ENCODE measurements at regions of chr20 and their contacts with region 1.

Region 1: DNA sequence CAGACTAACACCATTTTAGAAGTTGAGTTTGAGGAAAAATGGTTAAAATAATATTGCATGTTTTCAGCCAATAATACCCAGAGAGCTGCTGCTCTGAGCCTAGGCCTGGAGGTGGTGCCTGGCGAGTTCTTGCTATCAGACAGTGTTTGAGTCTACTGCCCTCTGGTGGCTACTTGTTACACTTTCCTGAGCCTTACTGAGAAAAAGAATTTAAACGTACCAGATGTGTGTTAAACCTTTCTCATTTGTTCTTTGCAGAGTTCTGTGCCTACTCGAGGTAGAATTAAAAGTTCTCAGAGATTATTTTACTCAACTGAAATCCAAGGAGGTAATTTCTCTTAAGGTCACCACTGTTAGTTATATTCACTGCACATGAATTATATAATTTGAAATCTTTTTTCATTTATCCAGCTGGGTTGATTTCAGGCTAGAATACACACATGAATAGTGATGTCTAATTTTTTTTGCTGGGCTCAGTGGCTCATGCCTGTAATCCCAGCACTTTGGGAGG is 38.2 kb downstream of the SHLD1 start:
- DNase-seq: no peak
- H3K4me3 ChIP-seq: no peak overlapping the region
- H3K27ac ChIP-seq: no peak overlapping the region
- H3K4me1 ChIP-seq: peaks cover 15 to 21% (median 19%) of the 10 kb centered on the region in 4 donors
- H3K27me3 ChIP-seq: no peaks in the 10 kb centered on the region
- CTCF ChIP-seq: peak; percentile 85 to 96 (median 90)
- EP300 ChIP-seq: no peak
- POLR2A ChIP-seq: no peak

Region 2: DNA sequence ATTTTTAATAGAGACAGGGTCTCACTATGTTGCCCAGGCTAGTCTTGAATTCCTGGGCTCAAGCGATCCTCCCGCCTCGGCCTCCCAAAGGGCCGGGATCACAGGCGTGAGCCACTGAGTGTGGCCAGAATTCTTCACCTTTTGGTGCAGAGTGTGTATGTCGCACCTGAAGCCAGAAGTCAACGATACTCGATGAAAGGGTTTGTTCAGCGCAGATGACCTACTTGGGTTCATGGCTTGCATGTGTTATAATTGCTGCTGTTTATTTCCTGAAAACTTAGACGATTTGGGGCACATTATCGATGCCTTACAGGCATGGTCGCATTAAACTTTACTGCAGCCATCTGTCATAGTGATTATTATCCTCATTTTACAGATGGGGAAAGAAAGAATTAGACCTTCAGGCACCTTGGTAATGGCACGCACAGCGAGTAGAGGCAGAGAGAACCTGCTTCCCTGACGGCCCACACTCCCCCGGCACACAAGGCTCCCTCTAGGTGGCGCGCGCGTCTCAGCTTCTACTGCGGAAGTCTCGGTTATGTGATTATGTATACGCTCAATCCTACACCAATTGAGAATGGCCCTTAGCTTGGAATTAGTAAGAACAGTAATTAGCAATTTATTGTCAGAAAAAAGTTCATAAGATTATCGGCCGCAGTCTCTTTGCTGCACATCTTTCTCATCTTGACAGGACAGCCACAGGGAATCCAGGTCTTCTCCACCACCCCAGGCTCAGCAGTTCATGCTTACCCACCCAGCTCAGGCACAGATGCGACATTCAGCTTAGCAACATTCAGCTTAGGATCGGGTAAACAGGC is 258.9 kb before region 1 on chr20:
- intact Hi-C with region 1: loop called (anchors 1 kb)
- DNase-seq: peak; percentile 95
- H3K4me3 ChIP-seq: no peak overlapping the region
- H3K27ac ChIP-seq: no peak overlapping the region
- H3K4me1 ChIP-seq: peaks cover 10 to 16% (median 11%) of the 10 kb centered on the region in 4 donors
- H3K27me3 ChIP-seq: no peaks in the 10 kb centered on the region
- CTCF ChIP-seq: peak; percentile 62 to 87 (median 67)
- EP300 ChIP-seq: no peak
- POLR2A ChIP-seq: no peak

Region 3: DNA sequence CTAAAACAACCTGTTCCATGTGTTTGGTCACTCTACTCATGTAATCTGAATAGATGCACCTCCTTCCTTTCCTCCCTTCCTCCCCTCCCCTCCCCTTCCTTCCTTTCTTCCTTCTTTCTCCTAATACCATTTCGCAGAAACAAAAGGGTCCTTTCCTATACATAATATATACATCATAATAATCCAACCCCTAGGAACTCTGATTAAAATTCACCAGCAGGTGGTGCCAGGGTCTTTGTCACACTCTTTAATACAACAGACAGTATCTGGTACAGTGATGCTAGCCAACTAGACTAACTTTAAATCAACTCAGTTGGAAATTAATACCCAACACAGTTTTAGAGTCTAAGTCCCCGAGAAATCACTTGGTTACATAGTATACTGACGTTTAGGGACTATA is 219.4 kb before region 1 on chr20:
- intact Hi-C with region 1: loop called (anchors 5 kb)
- DNase-seq: no peak
- H3K4me3 ChIP-seq: no peak overlapping the region
- H3K27ac ChIP-seq: no peak overlapping the region
- H3K4me1 ChIP-seq: peaks cover 0 to 10% (median 2%) of the 10 kb centered on the region in 4 donors
- H3K27me3 ChIP-seq: no peaks in the 10 kb centered on the region
- CTCF ChIP-seq: peak; percentile 57 to 68 (median 57)
- EP300 ChIP-seq: no peak
- POLR2A ChIP-seq: no peak

Region 4: DNA sequence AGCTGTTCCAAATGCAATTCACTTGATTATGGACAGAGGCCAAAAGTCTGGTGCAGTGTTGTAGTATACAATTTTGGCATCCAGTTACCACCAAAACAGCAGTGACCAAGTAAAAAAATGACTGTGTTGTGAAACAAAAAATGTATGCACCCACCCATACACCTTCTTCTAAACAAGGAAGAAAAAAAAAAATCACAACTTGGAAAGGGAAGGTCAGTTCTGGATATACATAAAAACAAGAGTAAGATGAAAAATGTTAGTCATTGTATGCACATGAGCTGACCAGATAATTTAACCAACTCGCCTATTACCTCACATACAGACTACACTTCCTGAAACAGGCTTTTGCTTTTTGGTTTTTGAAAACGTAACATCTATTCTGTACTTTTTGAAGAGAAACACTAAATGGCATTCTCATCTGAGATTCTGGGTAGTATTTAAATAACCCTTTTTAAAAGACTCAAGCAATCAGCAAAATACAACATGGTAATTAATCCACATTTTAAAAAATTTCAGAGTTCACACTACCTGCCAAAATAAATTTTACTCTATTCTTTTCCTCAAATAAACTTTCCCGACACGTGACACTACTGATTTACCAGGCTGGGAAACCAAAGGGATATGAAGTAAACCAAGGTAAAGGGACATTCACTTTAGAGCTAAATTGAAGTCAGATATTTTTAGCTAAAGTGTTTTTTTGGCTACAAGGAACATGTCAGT is 179.8 kb before region 1 on chr20:
- intact Hi-C with region 1: loop called (anchors 10 kb)
- DNase-seq: peak; percentile 31
- H3K4me3 ChIP-seq: peak overlapping the region; percentile 69 to 96 (median 81)
- H3K27ac ChIP-seq: peak overlapping the region; percentile 95 to 99 (median 96)
- H3K4me1 ChIP-seq: peaks cover 28 to 76% (median 61%) of the 10 kb centered on the region in 4 donors
- H3K27me3 ChIP-seq: no peaks in the 10 kb centered on the region
- CTCF ChIP-seq: no peak
- EP300 ChIP-seq: no peak
- POLR2A ChIP-seq: no peak

Region 5: DNA sequence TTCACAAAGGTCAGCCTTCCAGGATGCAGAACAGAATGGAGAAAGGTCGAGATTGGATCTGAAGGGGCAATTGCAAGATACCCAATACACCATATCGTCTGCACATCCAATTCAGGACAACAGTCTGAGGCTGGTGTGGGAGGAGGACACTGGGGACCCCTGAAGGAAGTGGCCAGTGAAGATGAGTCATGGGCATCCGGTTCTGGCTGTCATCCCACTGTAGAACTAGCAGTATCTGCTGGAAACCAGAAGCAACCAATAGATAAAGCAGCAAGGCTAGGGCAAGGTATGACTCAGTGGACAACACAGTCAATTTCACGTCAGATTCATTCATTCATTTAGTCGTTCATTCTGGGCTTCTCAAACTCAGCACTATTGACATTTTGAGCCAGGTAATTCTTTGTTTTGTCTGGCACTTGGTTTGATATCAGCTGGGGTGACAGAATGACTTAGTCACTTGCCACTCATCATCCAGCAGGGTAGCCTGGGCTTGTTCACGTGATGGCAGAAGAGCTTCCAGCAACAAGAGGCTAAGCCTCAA is 68.5 kb before region 1 on chr20:
- intact Hi-C with region 1: loop called (anchors 10 kb)
- DNase-seq: no peak
- H3K4me3 ChIP-seq: no peak overlapping the region
- H3K27ac ChIP-seq: peak overlapping the region in 1 of 4 donors; percentile 49
- H3K4me1 ChIP-seq: peaks cover 11 to 23% (median 14%) of the 10 kb centered on the region in 4 donors
- H3K27me3 ChIP-seq: no peaks in the 10 kb centered on the region
- CTCF ChIP-seq: no peak
- EP300 ChIP-seq: no peak
- POLR2A ChIP-seq: no peak

Region 6: GRCh38 chr20:5895626-5896025 is 107.2 kb after region 1 on chr20:
- intact Hi-C with region 1: no loop called
- DNase-seq: no peak
- H3K4me3 ChIP-seq: no peak overlapping the region
- H3K27ac ChIP-seq: no peak overlapping the region
- H3K4me1 ChIP-seq: no peaks in the 10 kb centered on the region
- H3K27me3 ChIP-seq: peaks cover 0 to 11% (median 0%) of the 10 kb centered on the region in 4 donors
- CTCF ChIP-seq: no peak
- EP300 ChIP-seq: no peak
- POLR2A ChIP-seq: no peak